ENCODE measurements at regions of chr1 and their contacts with region 1.

Region 1: GRCh38 chr1:3453203-3453761 is 1.2 kb upstream of the ARHGEF16 start:
- DNase-seq: peak; percentile 80
- H3K4me3 Mint-ChIP-seq: peak overlapping the region; percentile 40
- H3K27ac Mint-ChIP-seq: no peak overlapping the region
- H3K4me1 Mint-ChIP-seq: peaks cover 2% of the 10 kb centered on the region
- H3K27me3 Mint-ChIP-seq: peaks cover 59% of the 10 kb centered on the region

Region 2: GRCh38 chr1:3380469-3380868 is 72.8 kb before region 1 on chr1:
- CTCF ChIA-PET with region 1: no interaction called
- DNase-seq: no peak
- H3K4me3 Mint-ChIP-seq: no peak overlapping the region
- H3K27ac Mint-ChIP-seq: no peak overlapping the region
- H3K4me1 Mint-ChIP-seq: no peaks in the 10 kb centered on the region
- H3K27me3 Mint-ChIP-seq: peaks cover 4% of the 10 kb centered on the region

Region 3: DNA sequence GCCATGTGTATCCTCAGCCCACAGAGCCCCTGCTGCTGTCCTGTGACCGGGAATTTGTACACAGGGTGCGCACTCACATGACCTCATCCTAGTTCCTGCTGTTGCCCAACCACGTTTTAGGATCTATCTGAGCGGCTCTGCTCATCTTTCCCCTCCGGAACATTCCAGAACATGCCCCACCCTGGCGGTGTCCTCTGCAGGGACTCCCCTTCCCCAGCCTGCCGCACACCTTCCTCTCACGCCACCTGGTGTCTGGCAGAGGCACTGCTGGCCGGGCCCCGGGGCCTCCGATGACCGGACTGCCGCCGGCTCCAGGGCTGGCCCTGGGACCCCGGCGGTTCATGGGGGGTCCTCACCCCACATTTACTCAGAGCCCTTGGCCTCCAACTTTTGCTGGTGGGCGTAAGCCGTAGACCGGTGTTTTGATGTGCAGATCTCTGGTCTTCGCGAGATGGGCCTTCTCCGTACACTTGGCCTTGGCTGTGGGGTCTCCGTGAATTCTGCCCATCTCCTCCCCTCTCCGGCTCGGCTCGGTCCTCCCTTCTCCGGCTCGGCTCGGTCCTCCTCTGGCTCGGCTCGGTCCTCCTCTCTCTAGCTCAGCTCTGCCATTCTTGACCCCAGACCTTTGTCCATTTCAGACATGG is 30.6 kb after region 1 on chr1:
- CTCF ChIA-PET with region 1: interaction called, 12 read pairs
- DNase-seq: peak; percentile 60
- H3K4me3 Mint-ChIP-seq: no peak overlapping the region
- H3K27ac Mint-ChIP-seq: no peak overlapping the region
- H3K4me1 Mint-ChIP-seq: no peaks in the 10 kb centered on the region
- H3K27me3 Mint-ChIP-seq: no peaks in the 10 kb centered on the region

Region 4: GRCh38 chr1:3491291-3492246 is 38.3 kb after region 1 on chr1:
- CTCF ChIA-PET with region 1: interaction called, 12 read pairs
- DNase-seq: peak; percentile 89
- H3K4me3 Mint-ChIP-seq: peak overlapping the region; percentile 26
- H3K27ac Mint-ChIP-seq: no peak overlapping the region
- H3K4me1 Mint-ChIP-seq: peaks cover 3% of the 10 kb centered on the region
- H3K27me3 Mint-ChIP-seq: no peaks in the 10 kb centered on the region

Region 5: DNA sequence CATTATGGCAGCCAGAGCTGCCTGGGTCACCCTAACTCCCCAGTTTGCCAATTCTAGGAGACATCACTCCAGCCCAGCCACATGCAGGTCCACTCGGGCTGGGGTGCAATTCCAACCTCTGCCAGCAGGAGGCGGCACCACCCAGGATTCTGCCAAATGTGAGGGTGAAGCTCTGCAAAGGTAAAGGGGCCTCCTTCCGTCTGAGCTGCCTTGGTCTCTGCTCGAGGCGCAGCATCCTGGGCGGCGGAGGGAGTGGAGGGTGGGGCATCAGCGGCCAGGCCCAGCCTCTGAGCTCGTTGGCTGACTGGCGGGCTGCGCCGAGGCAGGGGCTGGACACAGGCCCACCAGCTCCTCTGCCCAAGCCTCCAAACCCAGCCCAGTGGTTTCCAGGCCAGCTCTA is 65.0 kb after region 1 on chr1:
- CTCF ChIA-PET with region 1: no interaction called
- DNase-seq: peak; percentile 50
- H3K4me3 Mint-ChIP-seq: no peak overlapping the region
- H3K27ac Mint-ChIP-seq: no peak overlapping the region
- H3K4me1 Mint-ChIP-seq: no peaks in the 10 kb centered on the region
- H3K27me3 Mint-ChIP-seq: no peaks in the 10 kb centered on the region